Calu3 (cell line): ENCODE measurements at regions of chr3 and their contacts with region 1.

Region 1: DNA sequence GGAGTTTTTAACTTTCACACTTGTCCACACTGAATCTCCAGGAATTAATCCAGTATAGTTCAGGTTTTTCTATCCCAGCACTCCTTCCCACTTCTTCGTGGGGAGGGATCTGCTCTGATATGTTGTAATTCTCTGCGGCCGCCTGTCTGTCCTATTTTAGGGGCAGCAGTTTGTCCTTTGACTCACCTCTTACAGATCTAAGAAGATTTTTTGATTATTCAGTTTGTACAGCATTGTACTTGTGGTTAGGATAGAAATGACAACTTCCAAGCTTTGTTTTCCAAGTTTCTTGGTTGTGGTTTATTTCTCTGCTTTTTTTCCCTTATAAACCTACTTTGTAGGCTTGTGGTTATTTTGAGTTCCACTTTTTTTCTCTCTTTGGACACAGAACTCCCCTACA is 601.7 kb downstream of the SI start:
- DNase-seq: no peak
- H3K4me3 Mint-ChIP-seq: no peak overlapping the region
- H3K27ac Mint-ChIP-seq: no peak overlapping the region
- H3K4me1 Mint-ChIP-seq: no peaks in the 10 kb centered on the region
- H3K27me3 Mint-ChIP-seq: no peaks in the 10 kb centered on the region
- CTCF ChIP-seq: no peak

Region 2: DNA sequence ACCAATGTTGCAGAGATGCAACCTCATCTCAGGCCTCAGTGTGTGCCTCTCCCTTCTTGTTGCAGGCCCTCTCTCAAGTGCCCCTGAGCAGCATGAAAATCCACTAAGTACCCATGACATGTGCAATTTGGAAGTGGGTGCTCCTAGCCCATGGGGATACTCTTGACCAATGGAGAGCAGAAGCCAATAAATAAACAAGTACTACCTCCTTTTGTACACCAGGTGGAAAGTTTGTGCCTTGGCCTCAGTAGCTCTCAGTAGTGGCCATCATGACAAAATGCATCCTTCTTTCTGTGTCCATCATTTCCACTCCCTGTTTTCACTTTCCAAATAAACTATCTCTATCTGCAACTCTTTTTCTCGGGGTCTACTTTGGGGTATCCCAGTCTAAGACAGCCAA is 82.1 kb after region 1 on chr3:
- CTCF ChIA-PET with region 1: interaction called, 10 read pairs
- intact Hi-C with region 1: no loop called
- DNase-seq: no peak
- H3K4me3 Mint-ChIP-seq: no peak overlapping the region
- H3K27ac Mint-ChIP-seq: no peak overlapping the region
- H3K4me1 Mint-ChIP-seq: no peaks in the 10 kb centered on the region
- H3K27me3 Mint-ChIP-seq: no peaks in the 10 kb centered on the region
- CTCF ChIP-seq: no peak